ENCODE measurements at regions of chr7 and their contacts with region 1.

Region 1: GRCh38 chr7:112550468-112551060 is 69.8 kb downstream of the LSMEM1 start:
- DNase-seq: no peak
- ATAC-seq: peak; percentile 37 to 77 (median 56)
- H3K4me3 ChIP-seq: no peak overlapping the region
- H3K27ac ChIP-seq: no peak overlapping the region
- H3K4me1 ChIP-seq: no peaks in the 10 kb centered on the region
- H3K27me3 ChIP-seq: no peaks in the 10 kb centered on the region
- CTCF ChIP-seq: peak; percentile 76 to 96 (median 90)
- POLR2A ChIP-seq: no peak

Region 2: DNA sequence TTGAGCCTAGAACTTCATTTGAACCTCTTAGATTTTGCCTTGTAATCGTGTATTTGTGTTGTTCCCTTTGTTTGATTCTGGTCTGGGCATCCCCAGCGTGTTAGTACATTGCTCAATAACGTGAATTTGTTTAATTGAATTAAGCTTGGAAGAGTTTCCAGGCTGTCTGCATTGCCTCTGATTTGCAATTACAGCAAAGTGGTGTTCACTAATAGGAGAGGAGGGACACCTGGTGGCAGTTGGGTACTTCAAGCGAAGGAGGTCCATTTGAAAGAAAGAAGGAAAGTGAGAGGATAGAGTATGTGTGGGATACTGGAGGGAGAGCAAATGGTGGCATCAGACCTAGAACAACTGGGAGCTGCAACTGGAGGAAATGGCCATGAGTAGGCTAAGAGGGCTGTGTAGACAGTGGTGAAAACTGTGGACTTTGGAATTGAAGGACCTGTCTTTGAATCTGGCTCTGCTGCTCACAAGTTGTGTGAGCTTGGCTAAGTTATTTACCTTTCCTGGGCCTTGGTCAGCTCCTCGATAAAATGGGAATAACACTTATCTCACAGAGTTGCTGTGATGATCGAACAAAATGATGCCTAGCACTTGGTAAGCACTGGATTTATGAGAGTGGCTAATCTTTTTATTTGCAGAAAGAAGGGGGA is 54.6 kb before region 1 on chr7:
- intact Hi-C with region 1: no loop called
- DNase-seq: peak in 2 of 5 donors; percentile 46 to 55
- ATAC-seq: peak; percentile 52 to 90 (median 89)
- H3K4me3 ChIP-seq: no peak overlapping the region
- H3K27ac ChIP-seq: peak overlapping the region in 1 of 12 donors; percentile 30
- H3K4me1 ChIP-seq: no peaks in the 10 kb centered on the region
- H3K27me3 ChIP-seq: no peaks in the 10 kb centered on the region
- CTCF ChIP-seq: peak; percentile 35 to 70 (median 62)
- POLR2A ChIP-seq: no peak

Region 3: DNA sequence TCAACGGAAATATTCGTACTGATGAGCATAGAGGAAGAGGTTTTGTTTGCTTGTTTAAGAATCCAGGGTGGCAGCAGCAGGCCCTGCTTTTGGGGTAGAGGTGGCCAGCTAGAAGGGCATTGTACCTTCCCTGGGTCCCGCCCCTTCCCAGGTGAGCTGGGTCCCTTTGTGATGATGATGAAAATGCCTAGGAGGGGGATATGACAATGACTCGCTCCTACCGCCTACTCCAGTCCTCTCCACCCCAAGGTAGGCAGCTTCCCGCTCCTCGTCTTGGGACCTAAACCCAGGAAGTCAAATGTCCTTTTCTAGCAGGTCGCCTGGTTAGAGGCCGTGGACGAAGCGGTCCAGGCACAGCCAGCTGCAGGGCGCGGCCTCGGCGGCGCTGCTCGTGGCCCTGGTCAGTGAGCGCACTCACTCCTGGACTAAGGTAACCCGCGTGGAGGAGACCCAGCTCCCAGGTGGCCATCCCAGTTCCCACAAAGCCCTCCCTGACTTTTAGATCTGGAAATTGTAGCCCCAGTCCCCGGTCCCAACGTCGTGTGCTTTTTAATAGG is 71.7 kb after region 1 on chr7:
- intact Hi-C with region 1: no loop called
- DNase-seq: peak in 1 of 5 donors; percentile 43
- ATAC-seq: no peak
- H3K4me3 ChIP-seq: no peak overlapping the region
- H3K27ac ChIP-seq: no peak overlapping the region
- H3K4me1 ChIP-seq: peaks cover 0 to 7% (median 0%) of the 10 kb centered on the region in 12 donors
- H3K27me3 ChIP-seq: no peaks in the 10 kb centered on the region
- CTCF ChIP-seq: no peak
- POLR2A ChIP-seq: no peak

Region 4: DNA sequence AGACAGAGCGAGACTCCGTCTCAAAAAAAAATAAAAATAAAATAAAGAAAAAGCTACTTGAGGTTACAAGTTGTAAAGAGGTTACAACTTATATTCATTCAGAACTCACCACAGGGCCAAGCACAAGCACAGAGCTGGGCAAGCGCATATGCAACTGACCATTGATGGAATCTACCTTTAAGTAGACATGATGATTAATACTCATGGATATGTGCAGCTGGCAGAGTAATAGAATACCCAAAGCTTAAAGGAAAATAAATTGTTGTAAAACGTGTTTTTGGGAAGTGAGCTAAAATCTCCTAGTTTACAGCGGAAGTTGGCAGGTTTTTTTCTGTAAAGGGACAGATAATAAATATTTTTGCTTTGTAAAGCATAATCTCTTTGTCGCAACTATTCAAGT is 128.1 kb after region 1 on chr7:
- intact Hi-C with region 1: loop called in 1 of 10 experiments (anchors 10 kb)
- DNase-seq: no peak
- ATAC-seq: no peak
- H3K4me3 ChIP-seq: no peak overlapping the region
- H3K27ac ChIP-seq: no peak overlapping the region
- H3K4me1 ChIP-seq: no peaks in the 10 kb centered on the region
- H3K27me3 ChIP-seq: no peaks in the 10 kb centered on the region
- CTCF ChIP-seq: no peak
- POLR2A ChIP-seq: no peak

Region 5: GRCh38 chr7:112908086-112908485 is 357.5 kb after region 1 on chr7:
- intact Hi-C with region 1: loop called in 1 of 10 experiments (anchors 10 kb)
- DNase-seq: no peak
- ATAC-seq: no peak
- H3K4me3 ChIP-seq: no peak overlapping the region
- H3K27ac ChIP-seq: no peak overlapping the region
- H3K4me1 ChIP-seq: no peaks in the 10 kb centered on the region
- H3K27me3 ChIP-seq: no peaks in the 10 kb centered on the region
- CTCF ChIP-seq: no peak
- POLR2A ChIP-seq: no peak

Region 6: DNA sequence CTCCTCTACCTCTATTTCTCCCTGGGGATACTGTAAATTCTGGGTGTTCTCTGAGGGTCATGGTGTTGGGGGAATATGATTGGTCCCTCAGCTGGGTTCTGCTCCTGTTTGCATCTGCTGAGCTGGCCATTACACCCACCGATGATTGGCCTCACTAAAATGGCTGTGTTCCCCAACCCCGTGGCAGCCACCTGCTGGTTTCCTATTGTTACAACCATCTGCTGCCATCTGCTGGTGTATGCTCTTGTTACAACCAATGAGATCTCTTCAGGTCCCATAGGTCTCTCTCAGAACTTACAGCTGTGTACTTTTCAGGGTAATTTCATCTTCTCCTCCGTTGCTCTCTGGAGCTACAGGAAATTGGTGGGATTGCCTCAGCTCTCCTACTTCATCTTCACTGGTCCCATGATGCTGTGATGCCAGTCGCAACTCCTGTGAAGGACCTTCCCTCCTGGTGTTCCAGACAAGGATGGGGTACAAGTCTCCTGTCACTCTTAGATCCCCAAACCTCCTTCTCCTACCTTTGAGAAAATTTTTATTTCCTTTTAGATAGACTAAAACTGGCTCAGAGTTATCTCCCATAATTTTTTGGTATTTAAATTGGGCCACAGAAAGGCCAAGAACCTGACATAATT is 871.2 kb after region 1 on chr7:
- intact Hi-C with region 1: loop called (anchors 1 to 5 kb)
- DNase-seq: peak; percentile 67 to 84 (median 67)
- ATAC-seq: peak; percentile 81 to 94 (median 86)
- H3K4me3 ChIP-seq: no peak overlapping the region
- H3K27ac ChIP-seq: no peak overlapping the region
- H3K4me1 ChIP-seq: peaks cover 0 to 2% (median 0%) of the 10 kb centered on the region in 12 donors
- H3K27me3 ChIP-seq: no peaks in the 10 kb centered on the region
- CTCF ChIP-seq: peak; percentile 55 to 83 (median 74)
- POLR2A ChIP-seq: no peak

Region 7: GRCh38 chr7:113705439-113705838 is 1154.9 kb after region 1 on chr7:
- intact Hi-C with region 1: loop called in 1 of 10 experiments (anchors 10 kb)
- DNase-seq: no peak
- ATAC-seq: no peak
- H3K4me3 ChIP-seq: no peak overlapping the region
- H3K27ac ChIP-seq: no peak overlapping the region
- H3K4me1 ChIP-seq: no peaks in the 10 kb centered on the region
- H3K27me3 ChIP-seq: no peaks in the 10 kb centered on the region
- CTCF ChIP-seq: no peak
- POLR2A ChIP-seq: no peak